Activated CD8-positive, alpha-beta T cell treated with anti-CD3 and anti-CD28 coated beads for 36 hours (primary cell): ENCODE measurements at regions of chr1 and their contacts with region 1.

Region 1: GRCh38 chr1:20194757-20195461 is 8.6 kb upstream of the PLA2G2C start:
- DNase-seq: peak; percentile 83
- ATAC-seq: peak; percentile 89
- H3K4me3 Mint-ChIP-seq: no peak overlapping the region
- H3K27ac Mint-ChIP-seq: no peak overlapping the region
- H3K4me1 Mint-ChIP-seq: peaks cover 4% of the 10 kb centered on the region
- H3K27me3 Mint-ChIP-seq: peaks cover 38% of the 10 kb centered on the region
- CTCF ChIP-seq: peak; percentile 93

Region 2: DNA sequence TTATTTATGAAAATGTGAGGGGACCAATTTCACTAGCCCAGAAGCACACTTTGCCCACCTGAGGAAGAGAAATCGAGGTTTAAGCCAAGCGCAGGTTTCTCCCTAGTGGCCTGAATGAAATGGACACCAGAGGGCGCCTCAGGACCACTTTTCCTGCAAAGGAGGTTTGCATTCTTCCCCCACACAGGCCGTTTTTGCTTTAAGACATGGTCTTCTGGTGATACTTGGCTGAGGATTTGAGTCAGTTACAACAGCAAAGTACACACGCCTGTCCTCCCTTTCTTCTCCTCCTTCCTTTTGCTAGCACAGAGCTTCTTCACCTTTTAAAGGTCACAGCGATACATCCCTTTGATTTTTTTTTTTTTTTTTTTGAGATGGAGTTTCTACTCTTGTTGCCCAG is 276.9 kb before region 1 on chr1:
- CTCF ChIA-PET with region 1: interaction called, 20 read pairs
- POLR2A ChIA-PET with region 1: interaction called, 3 read pairs
- intact Hi-C with region 1: no loop called
- DNase-seq: peak; percentile 92
- ATAC-seq: peak; percentile 76
- H3K4me3 Mint-ChIP-seq: no peak overlapping the region
- H3K27ac Mint-ChIP-seq: no peak overlapping the region
- H3K4me1 Mint-ChIP-seq: peaks cover 4% of the 10 kb centered on the region
- H3K27me3 Mint-ChIP-seq: no peaks in the 10 kb centered on the region
- CTCF ChIP-seq: peak; percentile 78

Region 3: GRCh38 chr1:20158358-20159067 is 36.4 kb before region 1 on chr1:
- CTCF ChIA-PET with region 1: interaction called, 57 read pairs
- POLR2A ChIA-PET with region 1: interaction called, 3 read pairs
- intact Hi-C with region 1: loop called (anchors 5 kb)
- DNase-seq: peak; percentile 63
- ATAC-seq: no peak
- H3K4me3 Mint-ChIP-seq: no peak overlapping the region
- H3K27ac Mint-ChIP-seq: no peak overlapping the region
- H3K4me1 Mint-ChIP-seq: peaks cover 8% of the 10 kb centered on the region
- H3K27me3 Mint-ChIP-seq: no peaks in the 10 kb centered on the region
- CTCF ChIP-seq: no peak

Region 4: GRCh38 chr1:20165522-20165951 is 29.4 kb before region 1 on chr1:
- CTCF ChIA-PET with region 1: interaction called, 57 read pairs
- POLR2A ChIA-PET with region 1: no interaction called
- intact Hi-C with region 1: loop called (anchors 5 kb)
- DNase-seq: peak; percentile 46
- ATAC-seq: peak; percentile 62
- H3K4me3 Mint-ChIP-seq: no peak overlapping the region
- H3K27ac Mint-ChIP-seq: no peak overlapping the region
- H3K4me1 Mint-ChIP-seq: no peaks in the 10 kb centered on the region
- H3K27me3 Mint-ChIP-seq: peaks cover 2% of the 10 kb centered on the region
- CTCF ChIP-seq: peak; percentile 39

Region 5: GRCh38 chr1:20172033-20172590 is 22.8 kb before region 1 on chr1:
- CTCF ChIA-PET with region 1: interaction called, 57 read pairs
- POLR2A ChIA-PET with region 1: no interaction called
- intact Hi-C with region 1: no loop called
- DNase-seq: no peak
- ATAC-seq: no peak
- H3K4me3 Mint-ChIP-seq: no peak overlapping the region
- H3K27ac Mint-ChIP-seq: peak overlapping the region; percentile 39
- H3K4me1 Mint-ChIP-seq: peaks cover 26% of the 10 kb centered on the region
- H3K27me3 Mint-ChIP-seq: peaks cover 2% of the 10 kb centered on the region
- CTCF ChIP-seq: no peak

Region 6: GRCh38 chr1:20178634-20179370 is 16.1 kb before region 1 on chr1:
- CTCF ChIA-PET with region 1: interaction called, 22 read pairs
- POLR2A ChIA-PET with region 1: no interaction called
- intact Hi-C with region 1: no loop called
- DNase-seq: no peak
- ATAC-seq: no peak
- H3K4me3 Mint-ChIP-seq: no peak overlapping the region
- H3K27ac Mint-ChIP-seq: no peak overlapping the region
- H3K4me1 Mint-ChIP-seq: peaks cover 17% of the 10 kb centered on the region
- H3K27me3 Mint-ChIP-seq: peaks cover 2% of the 10 kb centered on the region
- CTCF ChIP-seq: no peak

Region 7: DNA sequence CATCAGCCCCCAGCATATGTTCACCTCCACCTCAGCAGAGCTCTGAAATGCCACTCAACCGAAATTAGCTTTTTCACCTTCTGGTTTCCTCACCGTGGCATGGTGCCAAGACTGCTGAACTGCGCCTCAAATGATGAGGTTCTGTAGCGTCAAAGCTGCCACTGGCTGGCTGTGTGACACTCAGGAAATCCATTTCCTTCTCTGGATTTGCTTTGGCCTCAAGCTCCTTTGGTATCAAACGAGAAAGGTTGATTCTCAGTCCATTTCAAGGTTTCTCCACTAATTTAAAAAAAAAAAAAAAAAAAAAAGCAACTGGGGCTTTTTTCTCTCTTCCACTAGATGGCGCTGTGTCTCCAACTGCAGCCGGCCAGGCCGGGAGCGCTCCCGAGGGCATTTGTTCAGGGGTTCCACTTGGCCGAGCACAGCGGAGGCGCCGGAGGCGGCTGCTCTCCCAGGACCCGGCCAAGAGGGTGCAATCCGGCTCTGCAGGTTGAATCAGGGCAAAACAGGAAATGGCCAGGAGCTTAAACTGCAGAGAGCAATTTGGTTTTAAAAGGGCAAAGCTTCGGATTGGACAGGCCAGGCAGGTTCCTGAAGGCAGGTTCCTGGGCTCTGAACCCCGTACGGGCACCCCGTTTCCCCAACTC is 17.9 kb after region 1 on chr1:
- CTCF ChIA-PET with region 1: interaction called, 17 read pairs
- POLR2A ChIA-PET with region 1: no interaction called
- intact Hi-C with region 1: no loop called
- DNase-seq: peak; percentile 76
- ATAC-seq: peak; percentile 57
- H3K4me3 Mint-ChIP-seq: no peak overlapping the region
- H3K27ac Mint-ChIP-seq: no peak overlapping the region
- H3K4me1 Mint-ChIP-seq: peaks cover 19% of the 10 kb centered on the region
- H3K27me3 Mint-ChIP-seq: peaks cover 39% of the 10 kb centered on the region
- CTCF ChIP-seq: peak; percentile 88

Region 8: GRCh38 chr1:20271498-20272400 is 76.8 kb after region 1 on chr1:
- CTCF ChIA-PET with region 1: no interaction called
- POLR2A ChIA-PET with region 1: no interaction called
- intact Hi-C with region 1: no loop called
- DNase-seq: no peak
- ATAC-seq: no peak
- H3K4me3 Mint-ChIP-seq: no peak overlapping the region
- H3K27ac Mint-ChIP-seq: no peak overlapping the region
- H3K4me1 Mint-ChIP-seq: no peaks in the 10 kb centered on the region
- H3K27me3 Mint-ChIP-seq: peaks cover 27% of the 10 kb centered on the region
- CTCF ChIP-seq: no peak

Region 9: GRCh38 chr1:20290624-20291597 is 96.0 kb after region 1 on chr1 and contains the start of gene VWA5B1:
- CTCF ChIA-PET with region 1: no interaction called
- POLR2A ChIA-PET with region 1: no interaction called
- intact Hi-C with region 1: no loop called
- DNase-seq: no peak
- ATAC-seq: no peak
- H3K4me3 Mint-ChIP-seq: peak within 1 kb of the TSS; percentile 8
- H3K27ac Mint-ChIP-seq: no peak within 1 kb of the TSS
- H3K4me1 Mint-ChIP-seq: peaks cover 11% of the 10 kb centered on the region
- H3K27me3 Mint-ChIP-seq: peaks cover 49% of the 10 kb centered on the region
- CTCF ChIP-seq: no peak
- total RNA-seq, gene VWA5B1: not detected